Endothelial cell of umbilical vein (primary cell): ENCODE measurements at regions of chr4 and their contacts with region 1.

Region 1: GRCh38 chr4:10164877-10165283 is 48.3 kb upstream of the WDR1 start:
- DNase-seq: peak; percentile 73
- H3K4me3 ChIP-seq: no peak overlapping the region
- H3K27ac ChIP-seq: no peak overlapping the region
- H3K4me1 ChIP-seq: no peaks in the 10 kb centered on the region
- H3K27me3 ChIP-seq: no peaks in the 10 kb centered on the region
- CTCF ChIP-seq: peak; percentile 65 to 74
- POLR2A ChIP-seq: no peak

Region 2: GRCh38 chr4:10180927-10181782 is 16.3 kb after region 1 on chr4:
- CTCF ChIA-PET with region 1: interaction called, 16 read pairs
- POLR2A ChIA-PET with region 1: no interaction called
- dilution Hi-C with region 1: no loop called
- intact Hi-C with region 1: no loop called
- DNase-seq: peak; percentile 55
- H3K4me3 ChIP-seq: no peak overlapping the region
- H3K27ac ChIP-seq: peak overlapping the region; percentile 87
- H3K4me1 ChIP-seq: peaks cover 18% of the 10 kb centered on the region
- H3K27me3 ChIP-seq: no peaks in the 10 kb centered on the region
- CTCF ChIP-seq: no peak
- POLR2A ChIP-seq: no peak

Region 3: GRCh38 chr4:10192331-10192730 is 27.5 kb after region 1 on chr4:
- CTCF ChIA-PET with region 1: interaction called, 10 read pairs
- POLR2A ChIA-PET with region 1: no interaction called
- dilution Hi-C with region 1: no loop called
- intact Hi-C with region 1: no loop called
- DNase-seq: no peak
- H3K4me3 ChIP-seq: no peak overlapping the region
- H3K27ac ChIP-seq: no peak overlapping the region
- H3K4me1 ChIP-seq: no peaks in the 10 kb centered on the region
- H3K27me3 ChIP-seq: no peaks in the 10 kb centered on the region
- CTCF ChIP-seq: no peak
- POLR2A ChIP-seq: no peak

Region 4: GRCh38 chr4:10535912-10536311 is 371.0 kb after region 1 on chr4:
- CTCF ChIA-PET with region 1: interaction called, 88 read pairs
- POLR2A ChIA-PET with region 1: no interaction called
- dilution Hi-C with region 1: loop called (anchors 25 kb)
- intact Hi-C with region 1: loop called (anchors 1 kb)
- DNase-seq: no peak
- H3K4me3 ChIP-seq: no peak overlapping the region
- H3K27ac ChIP-seq: no peak overlapping the region
- H3K4me1 ChIP-seq: peaks cover 3% of the 10 kb centered on the region
- H3K27me3 ChIP-seq: peaks cover 0 to 2% of the 10 kb centered on the region in 2 experiments
- CTCF ChIP-seq: no peak
- POLR2A ChIP-seq: no peak